PC-9 (cell line): ENCODE measurements at regions of chr1 and their contacts with region 1.

Region 1: DNA sequence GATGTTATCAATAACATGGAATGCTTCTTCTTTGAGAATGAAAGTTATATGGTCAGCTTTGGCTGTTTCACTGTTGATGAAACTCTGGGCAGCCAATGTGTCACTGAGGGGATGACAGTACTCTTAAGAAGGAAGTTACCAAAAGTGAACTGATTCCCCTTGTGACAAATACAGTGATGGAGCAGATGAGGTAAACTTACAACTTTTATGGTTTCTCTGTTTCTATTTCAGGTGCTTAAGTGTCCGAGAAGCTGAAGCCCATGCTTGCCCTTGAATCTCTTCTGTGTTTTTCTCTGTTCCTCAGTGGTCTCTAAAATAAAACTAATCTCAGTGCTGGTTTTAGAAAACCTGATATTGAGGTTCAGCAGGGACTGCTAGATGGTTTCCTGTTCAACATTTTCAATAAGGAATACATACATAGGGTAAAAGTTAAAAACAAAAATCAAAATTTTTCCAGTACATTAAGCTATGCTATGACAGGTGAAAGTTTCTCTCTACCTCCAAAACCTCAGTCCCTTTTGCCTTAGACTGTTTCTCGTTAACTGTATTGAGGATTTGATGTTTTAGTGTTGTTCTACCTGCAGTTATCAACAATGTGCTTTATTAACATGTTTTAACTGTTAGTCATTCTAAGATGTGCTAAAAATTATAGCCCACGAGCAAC is 454.4 kb upstream of the ADGRL4 start:
- DNase-seq: no peak
- H3K4me3 ChIP-seq: no peak overlapping the region
- H3K27ac ChIP-seq: no peak overlapping the region
- H3K4me1 ChIP-seq: no peaks in the 10 kb centered on the region
- H3K27me3 ChIP-seq: no peaks in the 10 kb centered on the region
- CTCF ChIP-seq: no peak

Region 2: DNA sequence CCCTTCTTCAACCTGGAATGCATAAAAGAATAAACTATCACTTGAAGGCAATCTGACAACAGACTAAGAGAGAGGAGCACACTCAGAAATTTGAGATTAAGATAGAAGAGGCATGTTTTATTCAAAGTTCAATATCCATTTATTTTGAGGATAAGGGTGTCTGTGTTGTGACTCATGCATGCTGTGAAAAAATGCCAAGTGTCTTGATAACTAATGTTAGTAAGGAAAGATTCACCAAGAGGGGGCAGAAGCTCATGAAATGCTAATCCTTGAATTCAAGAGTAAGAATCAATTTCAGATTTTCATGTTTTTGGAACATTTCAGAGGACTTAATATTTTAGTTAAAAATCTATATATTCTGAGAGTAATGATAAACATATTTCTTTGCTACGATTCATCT is 717.3 kb before region 1 on chr1:
- CTCF ChIA-PET with region 1: no interaction called
- POLR2A ChIA-PET with region 1: no interaction called
- intact Hi-C with region 1: no loop called
- DNase-seq: no peak
- H3K4me3 ChIP-seq: no peak overlapping the region
- H3K27ac ChIP-seq: no peak overlapping the region
- H3K4me1 ChIP-seq: no peaks in the 10 kb centered on the region
- H3K27me3 ChIP-seq: no peaks in the 10 kb centered on the region
- CTCF ChIP-seq: no peak

Region 3: DNA sequence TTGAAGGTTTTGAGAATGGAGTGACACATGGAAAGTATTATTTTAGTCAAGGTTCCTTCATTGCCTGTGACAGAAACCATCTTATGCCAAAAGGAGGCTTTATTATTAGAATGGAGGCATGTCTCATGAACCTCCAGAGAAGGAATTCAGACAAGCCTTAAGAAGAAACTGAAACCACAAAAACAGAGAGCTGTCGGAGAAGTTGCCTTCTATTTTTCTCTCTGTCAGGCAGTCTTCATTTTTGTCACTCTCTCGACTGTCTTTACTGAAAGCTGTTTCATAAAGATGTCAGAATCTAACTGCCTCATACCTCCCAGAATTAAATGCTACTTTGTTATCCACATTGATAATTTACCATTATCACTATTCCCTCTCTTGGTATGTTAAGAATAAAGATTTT is 19.7 kb before region 1 on chr1:
- CTCF ChIA-PET with region 1: no interaction called
- POLR2A ChIA-PET with region 1: no interaction called
- intact Hi-C with region 1: loop called (anchors 1 kb)
- DNase-seq: no peak
- H3K4me3 ChIP-seq: no peak overlapping the region
- H3K27ac ChIP-seq: no peak overlapping the region
- H3K4me1 ChIP-seq: no peaks in the 10 kb centered on the region
- H3K27me3 ChIP-seq: no peaks in the 10 kb centered on the region
- CTCF ChIP-seq: no peak

Region 4: DNA sequence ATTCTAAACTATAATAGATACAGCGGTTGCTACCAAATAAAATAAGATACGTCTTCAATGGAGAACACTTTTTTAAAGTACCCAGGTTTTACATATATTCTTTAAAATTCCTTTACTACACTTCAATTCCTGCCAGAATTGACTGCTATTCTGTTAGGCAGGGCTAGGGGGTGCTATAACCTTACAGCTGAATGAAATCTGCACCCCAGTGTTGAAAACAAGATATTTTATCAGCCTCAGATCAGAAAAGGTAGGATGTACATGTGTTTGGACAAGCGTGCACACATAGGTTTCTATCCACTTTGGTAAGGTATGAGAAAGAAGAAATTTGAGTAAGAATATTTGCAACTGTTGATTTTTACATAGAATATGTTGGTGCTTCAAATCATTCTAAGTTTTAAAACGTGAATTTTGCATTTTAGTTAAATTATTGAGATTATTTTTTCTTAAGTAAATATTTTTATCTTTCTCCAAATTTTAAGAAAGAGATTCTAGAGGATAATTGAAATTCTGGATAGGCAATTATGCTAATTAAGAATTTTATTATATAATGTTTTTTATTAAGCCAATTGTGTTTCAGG is 36.4 kb after region 1 on chr1:
- CTCF ChIA-PET with region 1: no interaction called
- POLR2A ChIA-PET with region 1: no interaction called
- intact Hi-C with region 1: no loop called
- DNase-seq: peak in 1 of 2 experiments; percentile 17
- H3K4me3 ChIP-seq: no peak overlapping the region
- H3K27ac ChIP-seq: no peak overlapping the region
- H3K4me1 ChIP-seq: no peaks in the 10 kb centered on the region
- H3K27me3 ChIP-seq: no peaks in the 10 kb centered on the region
- CTCF ChIP-seq: peak; percentile 95

Region 5: GRCh38 chr1:79638382-79638781 is 177.5 kb after region 1 on chr1:
- CTCF ChIA-PET with region 1: no interaction called
- POLR2A ChIA-PET with region 1: no interaction called
- intact Hi-C with region 1: no loop called
- DNase-seq: no peak
- H3K4me3 ChIP-seq: no peak overlapping the region
- H3K27ac ChIP-seq: no peak overlapping the region
- H3K4me1 ChIP-seq: no peaks in the 10 kb centered on the region
- H3K27me3 ChIP-seq: no peaks in the 10 kb centered on the region
- CTCF ChIP-seq: no peak